Right ventricle myocardium superior (tissue), 1 donor: ENCODE measurements at regions of chr9 and their contacts with region 1.

Region 1: GRCh38 chr9:21812946-21813568 is 10.6 kb downstream of the MTAP start:
- DNase-seq: peak; percentile 77
- ATAC-seq: peak; percentile 74

Region 2: DNA sequence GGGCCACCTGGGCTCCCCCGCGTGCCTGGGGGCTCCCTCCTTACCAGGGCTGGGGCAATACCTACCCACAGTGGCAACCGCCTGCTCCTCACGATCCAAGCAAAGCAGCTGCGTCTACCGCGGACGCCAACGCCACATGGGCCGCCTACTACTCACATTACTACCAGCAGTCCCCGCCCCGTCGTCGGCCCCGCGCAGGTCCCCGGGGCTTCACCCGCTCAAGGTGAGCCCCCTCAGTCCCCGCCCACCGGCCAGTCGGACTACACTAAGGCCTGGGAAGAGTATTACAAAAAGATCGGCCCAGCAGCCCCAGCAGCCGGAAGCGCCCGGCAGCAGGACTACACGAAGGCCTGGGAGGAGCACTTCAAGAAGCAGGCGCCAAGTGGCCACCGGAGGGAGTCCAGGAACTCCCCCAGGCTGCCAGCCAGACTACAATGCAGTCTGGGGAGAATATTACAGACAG is 116.6 kb before region 1 on chr9:
- intact Hi-C with region 1: no loop called
- DNase-seq: peak; percentile 42
- ATAC-seq: no peak

Region 3: DNA sequence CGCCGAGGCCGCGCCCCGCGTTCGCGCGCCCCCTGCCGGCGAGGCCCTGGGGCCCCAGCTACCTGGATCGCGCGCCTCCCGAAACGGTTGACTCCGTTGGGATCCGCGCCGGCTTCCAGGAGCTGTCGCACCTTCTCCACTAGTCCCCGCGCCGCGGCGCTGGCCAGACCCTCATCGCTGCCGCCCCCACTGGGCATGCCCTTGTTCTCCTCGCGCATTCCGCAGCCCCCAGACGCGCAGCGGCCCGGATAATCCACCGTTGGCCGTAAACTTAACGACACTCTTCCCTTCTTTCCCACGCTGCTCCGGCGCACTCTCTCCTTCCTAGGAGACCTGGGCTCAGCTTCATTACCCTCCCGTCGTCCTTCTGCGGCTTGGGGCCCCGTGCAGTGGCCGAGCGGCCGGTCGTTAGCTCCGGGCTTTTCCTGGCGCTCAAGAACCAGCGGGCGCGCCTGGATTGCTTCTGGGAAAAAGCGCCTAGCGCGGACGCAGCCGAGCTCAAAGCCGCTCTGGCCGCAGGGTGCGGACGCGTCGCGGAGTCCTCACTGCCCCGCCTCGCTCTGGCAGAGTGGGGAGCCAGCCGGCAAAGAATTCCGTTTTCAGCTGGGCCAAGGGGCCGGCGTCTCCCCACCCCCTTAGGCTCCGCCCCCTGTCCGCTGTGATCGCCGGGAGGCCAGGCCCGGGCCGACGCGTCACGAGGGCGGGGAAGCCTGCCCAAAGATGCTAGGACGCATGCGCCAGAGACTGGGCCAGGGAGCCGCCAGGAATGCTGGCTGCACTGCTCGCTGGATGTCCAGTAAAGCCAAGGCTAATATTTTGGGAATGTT is 195.9 kb after region 1 on chr9 and contains the start of gene CDKN2B:
- intact Hi-C with region 1: loop called (anchors 10 kb)
- DNase-seq: peak; percentile 97
- ATAC-seq: peak; percentile 100
- total RNA-seq, gene CDKN2B: 2.3 TPM

Region 4: DNA sequence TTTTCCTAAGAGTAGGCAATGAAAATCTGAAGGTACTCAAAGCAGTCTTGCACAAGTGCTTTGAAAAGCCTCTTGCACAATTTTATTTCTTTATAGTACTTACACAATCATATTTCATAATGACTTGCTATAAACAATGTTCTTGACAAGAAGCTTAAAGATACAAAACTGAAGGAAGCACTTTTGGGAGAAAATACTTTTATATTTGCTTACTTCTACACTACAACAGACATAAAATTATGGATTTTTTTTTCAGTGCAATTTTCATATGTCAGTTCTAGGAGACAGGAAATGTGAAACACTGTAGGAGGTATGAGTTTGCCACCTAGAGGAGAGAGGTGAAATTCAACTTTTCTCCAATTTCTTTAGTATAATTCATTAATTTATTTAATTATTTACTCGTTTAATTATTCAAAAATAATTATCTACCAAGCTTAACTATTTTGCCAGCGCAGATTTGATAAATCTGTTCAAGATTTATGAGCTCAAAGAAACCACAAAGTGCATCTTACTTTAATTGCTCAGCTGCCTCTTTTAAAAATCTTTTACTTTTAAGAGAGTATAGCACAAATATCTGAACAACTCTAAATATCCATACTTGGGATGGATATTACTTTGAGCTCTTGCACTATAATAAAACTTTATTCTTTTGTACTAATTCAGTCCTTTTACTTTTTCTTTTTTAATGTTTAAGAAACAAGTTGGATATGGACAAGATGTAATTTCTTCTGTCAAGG is 225.1 kb after region 1 on chr9:
- intact Hi-C with region 1: loop called (anchors 5 kb)
- DNase-seq: no peak
- ATAC-seq: no peak

Region 5: DNA sequence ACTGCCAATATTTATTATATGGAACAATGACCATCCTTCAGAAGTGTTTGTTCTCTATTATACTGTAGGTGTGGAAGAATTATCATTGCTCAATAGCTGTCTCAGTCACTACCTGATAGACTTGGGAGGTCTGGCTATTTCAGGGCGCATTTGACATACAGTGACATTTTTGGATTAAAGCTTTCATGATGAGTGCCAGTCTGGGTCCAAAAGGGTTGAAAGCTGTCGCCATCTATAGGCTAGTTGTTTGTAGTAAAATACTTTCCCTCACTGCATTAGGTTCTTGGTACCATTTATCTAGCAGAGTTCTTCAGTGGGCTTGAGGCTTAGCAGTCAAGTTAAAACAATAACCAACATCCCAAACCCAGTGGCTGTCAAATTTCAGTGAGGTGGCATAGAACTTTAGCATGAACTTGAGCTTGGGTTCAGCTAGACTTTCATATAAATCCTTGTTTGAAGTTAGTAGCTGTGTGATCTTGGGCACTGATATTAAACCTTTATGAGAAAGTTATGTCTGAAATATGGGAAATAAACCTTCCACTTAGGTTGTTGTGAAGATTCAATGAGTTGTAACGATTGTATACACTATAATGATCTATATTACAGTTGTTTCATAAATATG is 306.6 kb after region 1 on chr9:
- intact Hi-C with region 1: loop called (anchors 10 kb)
- DNase-seq: no peak
- ATAC-seq: peak; percentile 76

Region 6: GRCh38 chr9:22244141-22245011 is 431.3 kb after region 1 on chr9:
- intact Hi-C with region 1: loop called (anchors 5 kb)
- DNase-seq: no peak
- ATAC-seq: peak; percentile 73